Right ventricle myocardium inferior (tissue), 1 donor: ENCODE measurements at regions of chr9 and their contacts with region 1.

Region 1: DNA sequence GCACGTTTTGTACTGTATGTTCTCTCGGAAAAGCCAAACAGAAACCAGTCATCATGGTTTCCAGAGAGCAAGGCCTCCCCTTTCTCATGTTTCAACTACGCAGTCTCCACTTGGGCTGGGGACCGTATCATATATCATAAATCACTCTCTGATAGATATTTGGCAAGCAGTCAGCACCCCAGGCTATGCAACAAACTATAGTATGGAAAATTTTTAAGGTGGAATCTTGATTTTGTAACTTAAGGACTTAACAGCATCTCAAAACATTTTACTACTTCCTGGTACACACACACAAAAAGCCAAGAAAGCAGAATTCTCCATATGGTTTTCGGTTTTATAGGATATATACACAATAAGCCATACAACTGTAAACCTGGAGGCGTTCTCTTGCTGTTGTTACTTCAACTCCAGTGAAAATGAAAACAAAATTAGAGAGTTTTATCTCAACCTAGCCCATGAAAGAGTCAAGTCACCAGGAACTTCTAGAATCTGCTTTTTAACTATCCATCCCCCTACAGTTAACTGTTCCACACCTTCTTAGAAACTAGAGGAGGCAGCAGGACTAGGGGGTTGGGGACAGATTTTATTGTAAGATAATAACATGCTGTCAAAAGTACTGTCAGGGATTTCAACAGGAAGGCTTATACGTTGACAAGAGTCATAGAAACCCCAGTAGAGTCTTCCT is 283.4 kb downstream of the NFIB start:
- DNase-seq: no peak
- ATAC-seq: peak; percentile 46

Region 2: DNA sequence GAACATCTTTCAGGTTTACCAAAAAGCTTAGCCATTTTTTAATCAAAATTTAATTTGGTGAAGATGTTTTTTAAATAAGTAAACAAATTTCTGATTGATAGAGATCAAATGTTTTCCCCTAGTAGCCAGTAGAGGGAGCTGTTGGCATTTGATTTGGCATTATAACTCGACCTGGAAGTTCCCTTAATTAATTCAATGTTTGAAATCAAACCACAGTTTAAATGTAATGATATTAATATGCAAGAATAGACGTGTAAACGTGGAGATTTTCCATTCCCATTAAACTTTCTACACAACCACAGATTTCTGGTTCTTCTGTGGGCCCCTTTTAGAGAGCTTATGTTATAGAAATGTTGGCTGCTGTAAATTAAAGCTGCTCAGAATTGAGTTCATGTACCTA is 602.9 kb before region 1 on chr9:
- intact Hi-C with region 1: loop called (anchors 5 kb)
- DNase-seq: no peak
- ATAC-seq: no peak

Region 3: GRCh38 chr9:13688994-13689600 is 341.4 kb before region 1 on chr9:
- intact Hi-C with region 1: loop called (anchors 10 kb)
- DNase-seq: no peak
- ATAC-seq: no peak

Region 4: DNA sequence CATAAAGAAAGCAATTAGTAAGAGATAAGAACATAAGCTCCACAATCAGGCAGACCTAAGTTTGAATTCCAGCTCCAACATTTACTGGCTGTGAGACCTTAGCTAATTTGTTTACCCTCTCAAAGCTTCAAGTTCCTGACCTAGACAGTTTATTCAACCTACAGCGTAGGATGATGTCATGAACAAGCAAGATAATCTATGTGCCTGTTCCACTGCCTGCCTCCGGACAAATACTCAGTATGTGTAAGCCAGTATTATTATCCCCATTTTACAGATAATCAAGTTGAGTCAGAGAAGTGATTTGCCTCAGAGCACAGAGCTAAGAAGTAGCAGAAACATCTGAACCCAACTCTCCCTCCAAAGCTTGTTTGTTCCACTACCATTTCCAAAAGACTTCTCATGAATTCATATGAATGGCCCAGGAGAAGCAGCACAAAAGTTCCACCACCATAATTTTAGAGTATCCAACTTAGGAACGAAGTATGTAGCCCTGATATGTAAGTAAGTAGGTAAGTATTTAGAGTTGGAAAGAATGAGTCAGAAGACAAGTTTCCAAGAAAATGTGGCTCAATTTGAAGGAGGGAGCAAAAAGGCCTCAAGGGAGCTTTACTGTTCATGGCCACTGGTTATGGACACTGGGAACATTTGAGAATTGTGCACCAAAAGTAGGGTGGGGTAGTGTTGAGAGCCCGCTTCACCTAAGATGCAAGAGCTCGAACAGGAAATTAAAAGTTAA is 114.8 kb before region 1 on chr9:
- intact Hi-C with region 1: loop called (anchors 5 kb)
- DNase-seq: no peak
- ATAC-seq: peak; percentile 61

Region 5: DNA sequence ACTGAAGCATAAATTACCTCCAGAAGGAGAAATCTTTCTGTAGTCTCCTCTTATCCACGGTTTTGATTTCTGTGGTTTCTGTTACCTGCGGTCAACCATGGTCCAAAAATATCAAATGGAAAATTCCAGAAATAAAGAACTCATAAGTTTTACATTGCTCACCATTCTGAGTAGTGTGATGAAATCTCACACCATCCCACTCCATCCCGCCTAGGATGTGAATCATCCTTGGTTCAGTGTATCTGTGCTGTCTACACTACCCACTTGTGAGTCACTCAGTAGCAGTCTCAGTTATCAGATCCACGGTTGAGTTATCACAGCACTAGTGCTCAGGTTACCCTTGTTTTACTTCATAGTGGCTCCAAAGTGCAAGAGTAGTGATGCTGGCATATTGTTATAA is 87.8 kb before region 1 on chr9:
- intact Hi-C with region 1: no loop called
- DNase-seq: no peak
- ATAC-seq: peak; percentile 56

Region 6: DNA sequence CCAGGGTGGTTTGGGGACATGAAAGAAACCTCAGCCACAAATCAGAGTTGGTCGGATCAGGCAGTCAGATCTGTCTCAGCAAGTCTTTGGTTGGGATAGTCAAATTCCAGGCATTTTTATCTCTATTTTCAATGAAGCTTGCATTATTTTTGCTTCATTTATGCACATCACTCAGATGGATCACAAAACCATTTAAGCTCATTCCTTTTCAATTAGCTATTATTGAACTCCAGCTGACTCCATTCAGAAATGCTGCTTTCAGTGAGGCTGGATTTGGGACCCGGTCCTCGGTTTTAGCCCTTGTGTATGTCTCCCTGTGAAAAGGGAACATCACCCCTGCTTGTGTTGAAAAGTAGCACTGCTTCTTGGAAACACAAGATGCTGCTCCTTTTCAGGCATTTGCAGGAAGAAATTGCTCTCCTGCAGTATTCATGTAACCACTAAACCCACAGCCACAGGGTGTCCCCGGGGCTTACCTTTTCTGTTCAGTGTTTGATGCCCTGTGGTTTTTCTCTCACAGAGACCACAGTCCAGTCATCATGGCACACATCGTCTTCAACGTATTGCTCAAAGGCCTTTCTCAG is 50.5 kb after region 1 on chr9:
- intact Hi-C with region 1: no loop called
- DNase-seq: no peak
- ATAC-seq: no peak

Region 7: DNA sequence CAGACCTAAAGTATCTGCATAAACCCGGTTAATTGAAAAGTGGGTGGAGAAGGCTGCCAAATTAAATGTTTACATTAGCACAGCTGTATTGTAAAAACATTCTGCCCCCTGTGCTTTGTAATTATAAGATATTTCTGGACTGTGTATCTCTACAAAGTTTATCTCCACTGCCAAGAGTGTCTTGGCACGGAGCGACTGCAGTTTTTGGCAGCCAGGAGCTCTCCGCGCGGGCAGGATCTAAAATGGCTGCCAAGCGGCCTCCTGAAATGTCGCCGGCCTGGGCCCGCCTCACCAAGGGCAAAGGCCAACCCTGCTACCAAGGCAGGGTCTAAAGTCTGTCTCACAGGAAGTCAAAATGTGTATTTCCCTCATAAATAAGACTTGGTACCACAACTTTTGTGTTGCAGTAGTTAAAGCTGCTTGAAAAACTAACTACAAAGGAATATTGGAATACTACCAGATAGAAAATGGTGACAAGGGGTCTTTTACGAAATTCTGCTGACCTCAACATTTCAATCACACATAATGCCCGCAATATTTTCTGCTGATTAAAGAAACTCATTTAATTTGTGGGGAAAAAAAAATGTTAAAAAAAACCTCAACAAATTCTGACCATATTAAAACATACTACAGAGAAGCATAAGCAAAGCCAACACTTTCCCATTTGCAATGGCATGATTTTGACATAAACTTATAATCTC is 173.0 kb after region 1 on chr9:
- intact Hi-C with region 1: loop called (anchors 10 kb)
- DNase-seq: peak; percentile 77
- ATAC-seq: peak; percentile 70

Region 8: DNA sequence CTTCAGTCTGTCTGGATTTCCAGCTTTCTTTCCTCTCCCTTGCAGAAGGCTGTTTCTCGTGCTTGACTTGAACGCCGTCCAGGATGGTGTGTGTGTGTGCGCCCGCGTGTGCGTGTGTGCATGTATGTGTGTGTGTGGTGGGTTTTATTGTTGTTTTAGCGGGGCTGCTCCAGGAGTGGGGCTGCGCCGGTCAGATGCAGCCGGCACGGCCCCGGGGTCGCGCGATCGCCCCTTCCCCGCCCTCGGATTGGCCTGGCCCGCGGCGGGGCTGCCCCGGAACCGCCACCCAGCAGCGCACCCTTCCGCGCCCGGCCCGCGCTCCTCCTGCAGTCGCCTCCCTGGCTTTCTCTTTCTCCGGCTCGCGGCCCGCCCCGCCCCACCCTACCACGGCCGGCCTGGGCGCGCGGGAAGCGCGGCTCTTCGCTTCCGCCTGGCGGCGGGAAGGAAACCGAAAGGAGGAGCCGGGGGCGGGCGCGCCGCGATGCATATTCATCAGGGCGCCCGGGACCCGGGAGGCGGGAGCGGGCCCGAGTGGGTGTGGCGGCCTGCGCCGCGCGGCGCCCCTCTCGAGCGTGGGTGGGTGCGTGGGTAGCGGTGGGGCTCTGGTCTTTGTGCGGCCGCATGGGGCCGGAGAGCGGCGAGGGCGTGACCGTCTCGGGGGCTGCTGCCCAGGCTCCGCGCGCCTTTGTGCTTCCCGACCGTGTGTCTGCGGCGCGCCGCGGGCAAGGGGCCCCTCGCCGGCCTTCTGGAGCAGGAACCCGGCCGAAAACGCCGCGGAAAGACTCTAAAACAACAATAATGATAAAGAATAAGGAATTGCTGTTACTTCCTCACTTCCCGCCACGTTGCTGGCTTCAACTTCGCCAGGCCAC is 291.9 kb after region 1 on chr9:
- intact Hi-C with region 1: loop called (anchors 2 kb)
- DNase-seq: peak; percentile 94
- ATAC-seq: peak; percentile 95

Region 9: GRCh38 chr9:14428781-14429230 is 398.3 kb after region 1 on chr9:
- intact Hi-C with region 1: loop called (anchors 5 kb)
- DNase-seq: peak; percentile 55
- ATAC-seq: peak; percentile 84